K562 (cell line): ENCODE measurements at regions of chrX and their contacts with region 1.

Region 1: GRCh38 chrX:3811331-3812311 is 98.2 kb upstream of the PRKX start:
- DNase-seq: peak; percentile 18 to 53 (median 34)
- ATAC-seq: no peak
- H3K4me3 ChIP-seq: no peak overlapping the region
- H3K27ac ChIP-seq: no peak overlapping the region
- H3K4me1 ChIP-seq: peaks cover 3 to 26% of the 10 kb centered on the region in 2 experiments; a peak in 2 of 5 replicates
- H3K27me3 ChIP-seq: peaks cover 3 to 4% of the 10 kb centered on the region in 2 experiments; a peak in 2 of 5 replicates
- CTCF ChIP-seq: peak; percentile 60 to 73 (median 60)
- EP300 ChIP-seq: no peak
- POLR2A ChIP-seq: no peak
- RAD21 ChIP-seq: peak; percentile 65 to 77

Region 2: GRCh38 chrX:3129256-3129655 is 682.4 kb before region 1 on chrX:
- CTCF ChIA-PET with region 1: no interaction called
- POLR2A ChIA-PET with region 1: no interaction called
- in situ Hi-C with region 1: no loop called
- intact Hi-C with region 1: no loop called
- DNase-seq: no peak
- ATAC-seq: no peak
- H3K4me3 ChIP-seq: no peak overlapping the region
- H3K27ac ChIP-seq: no peak overlapping the region
- H3K4me1 ChIP-seq: no peaks in the 10 kb centered on the region
- H3K27me3 ChIP-seq: no peaks in the 10 kb centered on the region
- CTCF ChIP-seq: no peak
- EP300 ChIP-seq: no peak
- POLR2A ChIP-seq: no peak
- RAD21 ChIP-seq: no peak

Region 3: DNA sequence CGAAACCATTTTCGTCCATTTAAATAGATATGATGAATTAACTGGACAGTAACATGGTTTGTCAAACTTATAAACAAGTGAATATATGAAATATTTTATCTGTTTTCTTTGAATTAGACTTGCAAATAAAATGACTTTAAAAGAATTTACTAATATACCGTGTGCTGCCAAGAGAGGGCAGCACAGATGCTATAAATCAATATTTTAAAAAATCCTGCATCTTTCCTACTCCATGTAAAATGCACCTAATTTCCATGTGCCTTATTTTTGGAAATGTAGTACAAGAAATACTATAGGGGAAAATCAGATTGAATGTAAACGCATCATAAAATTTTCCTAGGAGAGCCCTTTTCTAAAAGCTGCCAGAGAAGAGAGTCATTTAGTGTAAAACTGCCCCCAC is 160.3 kb before region 1 on chrX:
- CTCF ChIA-PET with region 1: interaction called, 14 read pairs
- POLR2A ChIA-PET with region 1: no interaction called
- in situ Hi-C with region 1: loop called (anchors 5 kb)
- intact Hi-C with region 1: loop called (anchors 1 kb)
- DNase-seq: peak in 1 of 4 experiments; percentile 25
- ATAC-seq: no peak
- H3K4me3 ChIP-seq: no peak overlapping the region
- H3K27ac ChIP-seq: no peak overlapping the region
- H3K4me1 ChIP-seq: no peaks in the 10 kb centered on the region
- H3K27me3 ChIP-seq: no peaks in the 10 kb centered on the region
- CTCF ChIP-seq: peak in 2 of 3 experiments; percentile 38 to 70; a peak in 4 of 6 replicates
- EP300 ChIP-seq: no peak
- POLR2A ChIP-seq: no peak
- RAD21 ChIP-seq: peak; percentile 61

Region 4: DNA sequence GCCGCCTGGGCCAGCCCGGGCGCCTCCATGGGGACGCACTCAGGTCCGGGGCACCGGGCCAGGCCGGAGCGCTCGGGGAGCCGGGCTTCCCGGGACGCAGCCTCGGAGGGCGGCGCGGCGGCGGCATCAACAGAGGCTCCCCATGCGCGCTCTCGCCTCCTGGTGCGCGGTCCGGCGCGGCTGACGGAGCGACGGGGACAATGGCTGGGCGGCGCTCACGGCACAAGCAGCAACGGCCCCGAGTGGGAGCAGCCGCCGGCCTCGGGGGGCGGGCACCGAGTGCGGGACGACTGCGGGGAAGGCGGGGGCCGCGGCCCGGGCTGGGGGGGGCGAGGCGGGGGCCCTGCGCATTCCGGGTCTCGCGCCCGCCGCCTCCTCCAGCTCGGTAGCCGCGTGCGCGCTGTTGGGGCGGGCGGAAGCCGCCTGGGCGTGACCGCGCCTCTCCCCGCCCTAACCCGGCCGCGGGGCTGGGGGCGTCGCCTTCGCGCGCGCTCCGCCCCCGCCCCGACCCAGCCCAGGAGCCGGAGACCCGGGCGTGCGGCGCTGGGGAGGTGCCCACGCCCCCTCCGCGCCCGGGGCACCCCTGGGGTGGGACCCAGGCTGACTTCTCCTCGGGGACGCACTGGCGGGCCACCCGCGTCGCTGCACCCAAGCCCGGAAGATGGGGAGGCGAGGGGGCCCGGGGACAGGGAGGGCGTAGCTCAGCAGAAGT is 98.2 kb before region 1 on chrX and contains the start of gene PRKX:
- CTCF ChIA-PET with region 1: no interaction called
- POLR2A ChIA-PET with region 1: no interaction called
- in situ Hi-C with region 1: no loop called
- intact Hi-C with region 1: loop called (anchors 5 kb)
- DNase-seq: peak; percentile 71 to 86 (median 84)
- ATAC-seq: peak; percentile 89
- H3K4me3 ChIP-seq: peak within 1 kb of the TSS; percentile 74
- H3K27ac ChIP-seq: peak within 1 kb of the TSS; percentile 78
- H3K4me1 ChIP-seq: peaks cover 3 to 25% of the 10 kb centered on the region in 2 experiments; a peak in 4 of 5 replicates
- H3K27me3 ChIP-seq: no peaks in the 10 kb centered on the region
- CTCF ChIP-seq: no peak
- EP300 ChIP-seq: no peak
- POLR2A ChIP-seq: 0 out of 2 replicates have a peak, but pooled peaks have one; percentile 45
- RAD21 ChIP-seq: no peak
- polyA plus RNA-seq, gene PRKX: 3.3 to 4.5 TPM